Cardiac septum (tissue), 1 donor: ENCODE measurements at regions of chr2 and their contacts with region 1.

Region 1: DNA sequence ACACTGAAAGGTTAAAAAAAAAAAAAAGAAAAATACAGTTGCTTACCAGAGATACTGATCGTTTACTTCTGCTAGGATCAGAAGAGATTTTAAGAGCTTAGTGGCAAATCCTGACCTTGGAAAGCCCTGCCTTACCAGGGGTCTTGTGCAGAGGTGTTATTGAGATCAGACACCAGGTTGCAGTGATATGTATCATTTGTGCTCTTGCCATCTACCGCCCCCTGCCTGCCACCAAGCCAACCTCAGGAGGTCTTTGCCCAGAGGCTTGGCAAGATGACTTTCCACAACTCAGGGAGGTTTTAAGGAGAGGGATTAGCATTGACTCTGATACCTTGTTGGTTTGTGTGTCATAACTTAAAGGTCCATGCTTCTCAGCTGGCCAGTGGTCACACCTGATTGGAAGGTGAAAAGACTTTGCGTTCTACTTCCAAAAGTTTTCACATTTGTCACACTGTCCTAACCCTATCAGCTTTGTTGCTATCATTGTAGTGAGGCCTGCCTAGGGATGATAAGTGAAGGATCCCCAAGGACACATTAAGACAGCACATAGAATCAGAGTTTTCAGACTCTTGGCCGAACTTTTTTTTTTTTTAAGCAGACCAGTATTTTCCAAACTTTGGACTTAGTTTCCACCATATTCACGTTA is 46.2 kb upstream of the MGAT5 start:
- DNase-seq: peak; percentile 83

Region 2: GRCh38 chr2:133886735-133887660 is 320.7 kb before region 1 on chr2:
- intact Hi-C with region 1: loop called (anchors 10 kb)
- DNase-seq: peak; percentile 83

Region 3: GRCh38 chr2:134178241-134178877 is 29.3 kb before region 1 on chr2:
- intact Hi-C with region 1: no loop called
- DNase-seq: no peak

Region 4: DNA sequence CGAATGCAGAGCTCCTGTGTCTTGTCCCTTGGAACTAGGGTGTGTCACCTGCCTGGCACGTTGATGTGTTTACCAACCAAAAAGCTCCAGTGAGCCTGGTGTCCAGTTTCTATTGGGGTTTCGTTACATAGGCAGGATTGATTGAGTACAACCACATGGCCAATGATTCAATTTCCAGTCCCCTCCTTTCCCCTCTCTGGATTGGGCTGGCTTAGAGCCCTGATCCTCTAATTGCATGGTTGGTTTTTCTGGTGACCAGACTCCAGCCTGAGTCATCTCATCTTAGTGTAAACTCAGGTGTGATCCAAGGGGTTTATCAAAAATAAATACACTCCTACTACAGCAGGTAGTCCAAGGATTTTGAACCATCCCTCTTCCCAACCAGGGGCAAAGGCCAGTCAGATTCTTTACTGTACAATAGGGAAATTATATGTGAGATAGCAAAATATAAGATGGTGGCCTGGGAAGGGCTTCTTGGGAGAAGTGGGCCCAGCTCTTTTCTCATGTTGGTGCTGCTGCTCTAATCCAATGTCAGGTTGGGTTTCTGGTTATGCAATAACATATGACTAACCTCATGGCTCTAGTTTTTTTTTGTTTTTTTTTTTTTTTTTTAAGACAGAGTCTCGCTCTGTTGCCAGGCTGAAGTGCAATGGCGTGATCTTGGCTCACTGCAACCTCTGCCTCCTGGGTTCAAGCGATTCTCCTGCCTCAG is 18.5 kb before region 1 on chr2:
- intact Hi-C with region 1: no loop called
- DNase-seq: no peak

Region 5: GRCh38 chr2:134290358-134290757 is 82.7 kb after region 1 on chr2:
- intact Hi-C with region 1: no loop called
- DNase-seq: no peak

Region 6: GRCh38 chr2:134420259-134420658 is 212.6 kb after region 1 on chr2:
- intact Hi-C with region 1: no loop called
- DNase-seq: no peak